ENCODE measurements at regions of chr6 and their contacts with region 1.

Region 1: DNA sequence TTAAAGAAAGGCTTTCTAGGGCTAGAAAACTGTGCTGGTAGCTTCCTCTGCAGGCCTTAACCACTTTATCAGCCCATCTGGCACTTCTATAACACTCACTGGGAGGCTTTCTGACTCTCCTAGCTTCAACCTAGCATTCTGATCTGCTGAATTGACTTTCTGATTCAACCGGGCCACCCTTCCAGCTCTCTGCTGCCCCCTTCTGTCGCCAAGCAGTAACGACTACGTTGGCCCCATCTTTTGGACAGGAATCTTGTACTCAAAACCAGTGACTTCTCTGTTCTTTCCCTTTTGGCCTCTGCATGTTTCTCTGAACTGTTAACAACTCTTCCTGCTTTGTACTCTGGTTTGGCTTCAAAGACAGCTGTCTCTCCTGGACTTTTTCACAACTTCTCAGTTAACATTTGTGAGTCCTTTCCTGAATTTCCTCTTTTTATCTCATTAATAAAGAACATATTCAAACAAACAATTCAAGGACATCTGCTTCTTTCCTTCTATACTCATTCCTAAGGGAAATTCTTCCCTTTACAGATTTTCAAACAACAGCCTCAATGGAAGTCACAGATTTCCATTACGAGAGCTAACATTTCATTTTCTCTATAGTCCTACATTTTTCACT is 43.9 kb upstream of the FAM135A start:
- DNase-seq: peak; percentile 21
- ATAC-seq: peak; percentile 96
- H3K4me3 ChIP-seq: no peak overlapping the region
- H3K27ac ChIP-seq: no peak overlapping the region
- H3K4me1 ChIP-seq: no peaks in the 10 kb centered on the region
- H3K27me3 ChIP-seq: no peaks in the 10 kb centered on the region; a peak in 3 of 4 replicates
- CTCF ChIP-seq: peak; percentile 90 to 93 (median 90)
- EP300 ChIP-seq: no peak
- POLR2A ChIP-seq: no peak
- RAD21 ChIP-seq: peak; percentile 86

Region 2: DNA sequence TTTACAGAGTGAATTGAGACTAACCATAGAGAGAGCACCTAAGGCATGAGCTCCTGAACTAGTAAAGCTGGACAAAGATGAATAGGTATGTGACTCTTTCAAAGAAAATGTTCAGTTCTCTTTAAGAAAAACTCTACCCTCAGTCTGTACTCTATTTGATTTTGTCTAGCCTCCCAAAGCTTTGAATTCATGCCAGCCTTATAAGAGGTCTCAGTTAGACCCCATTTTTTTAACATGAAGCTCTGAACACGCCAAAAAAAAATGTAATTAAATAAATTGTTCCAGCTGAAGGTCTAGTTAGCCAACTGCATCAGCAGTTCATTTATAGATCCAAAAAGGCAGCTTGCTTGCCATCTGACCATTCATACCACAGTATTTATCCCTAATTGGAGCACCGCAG is 138.1 kb before region 1 on chr6:
- CTCF ChIA-PET with region 1: interaction called, 11 read pairs
- POLR2A ChIA-PET with region 1: no interaction called
- RAD21 ChIA-PET with region 1: interaction called, 3 read pairs
- SMC1A ChIA-PET with region 1: interaction called, 5 read pairs
- in situ Hi-C with region 1: no loop called
- intact Hi-C with region 1: no loop called
- DNase-seq: no peak
- ATAC-seq: no peak
- H3K4me3 ChIP-seq: no peak overlapping the region
- H3K27ac ChIP-seq: no peak overlapping the region
- H3K4me1 ChIP-seq: no peaks in the 10 kb centered on the region
- H3K27me3 ChIP-seq: no peaks in the 10 kb centered on the region; a peak in 1 of 4 replicates
- CTCF ChIP-seq: no peak
- EP300 ChIP-seq: no peak
- POLR2A ChIP-seq: no peak
- RAD21 ChIP-seq: no peak

Region 3: GRCh38 chr6:70246110-70246509 is 123.3 kb before region 1 on chr6:
- CTCF ChIA-PET with region 1: no interaction called
- POLR2A ChIA-PET with region 1: no interaction called
- RAD21 ChIA-PET with region 1: no interaction called
- SMC1A ChIA-PET with region 1: no interaction called
- in situ Hi-C with region 1: no loop called
- intact Hi-C with region 1: no loop called
- DNase-seq: no peak
- ATAC-seq: no peak
- H3K4me3 ChIP-seq: no peak overlapping the region
- H3K27ac ChIP-seq: no peak overlapping the region
- H3K4me1 ChIP-seq: no peaks in the 10 kb centered on the region
- H3K27me3 ChIP-seq: peaks cover 2 to 4% of the 10 kb centered on the region in 2 experiments; a peak in 2 of 4 replicates
- CTCF ChIP-seq: no peak
- EP300 ChIP-seq: no peak
- POLR2A ChIP-seq: no peak
- RAD21 ChIP-seq: no peak

Region 4: DNA sequence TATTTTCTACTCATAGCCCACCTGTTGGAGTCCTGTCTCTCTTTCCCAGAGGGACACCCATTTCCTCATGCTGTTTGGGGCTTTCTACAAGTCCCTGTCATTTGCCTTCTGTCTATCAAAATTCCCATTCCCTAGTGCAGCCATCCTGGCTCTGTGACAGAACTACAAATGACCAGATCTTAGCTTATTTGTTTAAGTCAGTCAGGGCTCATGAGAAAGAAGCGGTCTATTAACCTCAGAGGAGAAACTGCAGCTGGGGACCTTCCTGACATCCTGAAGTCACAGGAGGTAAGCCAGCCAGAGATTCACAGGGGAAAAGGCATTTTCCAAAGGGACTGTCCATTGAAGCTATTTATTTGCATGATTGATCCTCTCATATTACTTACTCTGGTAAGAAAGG is 64.8 kb before region 1 on chr6:
- CTCF ChIA-PET with region 1: interaction called, 257 read pairs
- POLR2A ChIA-PET with region 1: no interaction called
- RAD21 ChIA-PET with region 1: interaction called, 84 read pairs
- SMC1A ChIA-PET with region 1: interaction called, 103 read pairs
- in situ Hi-C with region 1: no loop called
- intact Hi-C with region 1: no loop called
- DNase-seq: no peak
- ATAC-seq: no peak
- H3K4me3 ChIP-seq: no peak overlapping the region
- H3K27ac ChIP-seq: no peak overlapping the region
- H3K4me1 ChIP-seq: no peaks in the 10 kb centered on the region
- H3K27me3 ChIP-seq: no peaks in the 10 kb centered on the region
- CTCF ChIP-seq: no peak
- EP300 ChIP-seq: no peak
- POLR2A ChIP-seq: no peak
- RAD21 ChIP-seq: no peak

Region 5: DNA sequence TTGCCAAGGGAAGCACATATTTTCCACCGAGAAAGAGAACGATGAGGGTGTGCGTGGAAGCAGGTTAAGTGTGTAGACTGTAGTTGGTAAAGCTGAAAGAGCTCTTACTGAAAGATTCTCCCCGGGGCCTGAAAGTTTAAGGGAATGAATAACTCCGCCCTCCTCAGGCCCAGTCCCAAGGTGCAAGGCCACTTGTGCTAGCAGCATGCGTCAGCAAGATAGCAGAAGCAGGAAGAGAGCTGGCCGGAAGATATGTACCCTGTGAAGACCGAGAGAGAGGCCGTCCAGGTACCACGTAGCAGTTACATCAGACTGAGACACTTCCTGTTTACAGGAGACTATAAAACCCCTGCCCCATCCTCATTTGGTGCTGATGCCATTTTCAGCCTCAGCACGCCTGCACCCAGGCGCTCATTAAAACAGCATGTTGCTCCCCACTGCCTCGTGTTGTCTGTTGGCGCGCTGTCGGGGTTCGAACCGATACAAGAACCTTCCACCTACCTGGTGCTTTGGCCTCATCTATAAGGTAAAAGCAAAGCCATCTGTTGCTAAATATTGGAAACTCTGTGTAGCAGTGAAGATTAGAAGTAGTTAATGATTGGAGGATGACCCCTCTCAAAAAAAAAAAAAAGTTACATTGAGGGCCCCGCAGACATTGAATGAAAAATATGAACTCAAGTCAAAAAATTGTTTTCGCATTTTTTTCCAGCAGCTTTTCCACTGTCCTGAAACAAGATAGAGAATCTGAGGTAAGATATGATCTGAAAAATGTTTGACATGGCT is 25.3 kb after region 1 on chr6:
- CTCF ChIA-PET with region 1: interaction called, 13 read pairs
- POLR2A ChIA-PET with region 1: no interaction called
- RAD21 ChIA-PET with region 1: no interaction called
- SMC1A ChIA-PET with region 1: no interaction called
- in situ Hi-C with region 1: no loop called
- intact Hi-C with region 1: loop called (anchors 2 kb)
- DNase-seq: no peak
- ATAC-seq: no peak
- H3K4me3 ChIP-seq: no peak overlapping the region
- H3K27ac ChIP-seq: no peak overlapping the region
- H3K4me1 ChIP-seq: no peaks in the 10 kb centered on the region
- H3K27me3 ChIP-seq: no peaks in the 10 kb centered on the region; a peak in 2 of 4 replicates
- CTCF ChIP-seq: no peak
- EP300 ChIP-seq: no peak
- POLR2A ChIP-seq: no peak
- RAD21 ChIP-seq: no peak

Region 6: GRCh38 chr6:70413114-70413991 is 43.9 kb after region 1 on chr6 and contains the start of gene FAM135A:
- CTCF ChIA-PET with region 1: interaction called, 36 read pairs
- POLR2A ChIA-PET with region 1: no interaction called
- RAD21 ChIA-PET with region 1: interaction called, 5 read pairs
- SMC1A ChIA-PET with region 1: interaction called, 5 read pairs
- in situ Hi-C with region 1: no loop called
- intact Hi-C with region 1: no loop called
- DNase-seq: peak; percentile 94
- ATAC-seq: peak; percentile 90
- H3K4me3 ChIP-seq: peak within 1 kb of the TSS; percentile 87
- H3K27ac ChIP-seq: peak within 1 kb of the TSS; percentile 74
- H3K4me1 ChIP-seq: no peaks in the 10 kb centered on the region
- H3K27me3 ChIP-seq: no peaks in the 10 kb centered on the region
- CTCF ChIP-seq: no peak
- EP300 ChIP-seq: no peak
- POLR2A ChIP-seq: peak; percentile 87
- RAD21 ChIP-seq: no peak
- polyA plus RNA-seq, gene FAM135A: 3.9 to 4.4 TPM

Region 7: GRCh38 chr6:70884074-70884983 is 514.9 kb after region 1 on chr6:
- CTCF ChIA-PET with region 1: interaction called, 6 read pairs
- POLR2A ChIA-PET with region 1: no interaction called
- RAD21 ChIA-PET with region 1: no interaction called
- SMC1A ChIA-PET with region 1: interaction called, 3 read pairs
- in situ Hi-C with region 1: no loop called
- intact Hi-C with region 1: loop called (anchors 10 kb)
- DNase-seq: peak; percentile 19
- ATAC-seq: peak; percentile 94
- H3K4me3 ChIP-seq: no peak overlapping the region
- H3K27ac ChIP-seq: no peak overlapping the region
- H3K4me1 ChIP-seq: no peaks in the 10 kb centered on the region
- H3K27me3 ChIP-seq: no peaks in the 10 kb centered on the region
- CTCF ChIP-seq: peak; percentile 75 to 89 (median 87); a peak in 4 of 6 replicates
- EP300 ChIP-seq: no peak
- POLR2A ChIP-seq: no peak
- RAD21 ChIP-seq: peak; percentile 97

Region 8: GRCh38 chr6:71012866-71013469 is 643.5 kb after region 1 on chr6:
- CTCF ChIA-PET with region 1: interaction called, 13 read pairs
- POLR2A ChIA-PET with region 1: no interaction called
- RAD21 ChIA-PET with region 1: interaction called, 4 read pairs
- SMC1A ChIA-PET with region 1: interaction called, 7 read pairs
- in situ Hi-C with region 1: no loop called
- intact Hi-C with region 1: loop called (anchors 1 kb)
- DNase-seq: peak; percentile 12
- ATAC-seq: peak; percentile 97
- H3K4me3 ChIP-seq: no peak overlapping the region
- H3K27ac ChIP-seq: no peak overlapping the region
- H3K4me1 ChIP-seq: no peaks in the 10 kb centered on the region
- H3K27me3 ChIP-seq: no peaks in the 10 kb centered on the region; a peak in 1 of 4 replicates
- CTCF ChIP-seq: peak; percentile 76 to 83 (median 80)
- EP300 ChIP-seq: no peak
- POLR2A ChIP-seq: no peak
- RAD21 ChIP-seq: peak; percentile 90

Measured in GM12878 (cell line).